ENCODE measurements at regions of chr1 and their contacts with region 1.

Region 1: DNA sequence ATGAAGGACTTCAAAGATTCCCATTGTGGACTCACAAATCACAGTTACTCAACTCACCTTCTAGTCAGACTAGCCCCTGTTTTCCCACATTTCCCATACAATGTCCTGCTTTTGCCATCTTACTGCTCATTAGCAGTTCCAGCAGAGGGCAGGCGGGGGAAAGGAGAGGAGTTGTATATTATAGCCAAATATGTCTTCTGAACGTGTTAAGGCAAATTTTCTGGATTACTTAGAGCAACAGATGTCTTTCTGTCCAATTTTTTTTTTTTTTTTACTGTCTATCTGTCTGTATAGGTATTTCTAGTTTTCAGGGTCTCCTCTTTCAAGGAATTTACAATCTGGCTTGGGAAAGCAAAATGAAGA is 29.9 kb upstream of the DDAH1 start:
- DNase-seq: peak; percentile 79
- H3K4me3 Mint-ChIP-seq: no peak overlapping the region
- H3K27ac Mint-ChIP-seq: peak overlapping the region; percentile 96
- H3K4me1 Mint-ChIP-seq: peaks cover 23% of the 10 kb centered on the region
- H3K27me3 Mint-ChIP-seq: no peaks in the 10 kb centered on the region
- CTCF ChIP-seq: peak; percentile 61

Region 2: GRCh38 chr1:85398391-85399064 is 96.4 kb before region 1 on chr1:
- CTCF ChIA-PET with region 1: no interaction called
- POLR2A ChIA-PET with region 1: no interaction called
- intact Hi-C with region 1: no loop called
- DNase-seq: peak; percentile 66
- H3K4me3 Mint-ChIP-seq: no peak overlapping the region
- H3K27ac Mint-ChIP-seq: no peak overlapping the region
- H3K4me1 Mint-ChIP-seq: peaks cover 7% of the 10 kb centered on the region
- H3K27me3 Mint-ChIP-seq: no peaks in the 10 kb centered on the region
- CTCF ChIP-seq: peak; percentile 44

Region 3: GRCh38 chr1:85484264-85484663 is 10.6 kb before region 1 on chr1:
- CTCF ChIA-PET with region 1: interaction called, 3 read pairs
- POLR2A ChIA-PET with region 1: interaction called, 11 read pairs
- intact Hi-C with region 1: no loop called
- DNase-seq: no peak
- H3K4me3 Mint-ChIP-seq: no peak overlapping the region
- H3K27ac Mint-ChIP-seq: no peak overlapping the region
- H3K4me1 Mint-ChIP-seq: no peaks in the 10 kb centered on the region
- H3K27me3 Mint-ChIP-seq: no peaks in the 10 kb centered on the region
- CTCF ChIP-seq: no peak

Region 4: DNA sequence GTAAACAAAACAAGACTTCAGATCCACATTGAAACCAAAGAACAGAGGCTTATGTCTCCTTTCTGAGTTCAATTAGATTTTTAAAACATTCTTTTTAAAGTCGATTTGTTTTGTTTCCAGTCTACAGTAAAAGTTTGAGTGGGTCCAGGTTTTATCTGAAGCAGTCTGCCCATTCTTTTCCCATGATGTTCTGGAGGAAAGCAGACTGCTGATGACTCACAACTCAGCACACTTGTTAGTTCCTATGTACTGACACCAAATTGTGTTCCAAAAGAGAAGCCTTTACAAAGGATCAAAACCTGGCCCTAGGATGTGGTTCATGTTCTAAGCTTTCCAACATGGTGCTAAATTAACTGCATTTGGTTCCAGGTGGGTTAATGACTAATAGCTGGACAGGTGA is 74.2 kb after region 1 on chr1:
- CTCF ChIA-PET with region 1: interaction called, 7 read pairs
- POLR2A ChIA-PET with region 1: interaction called, 26 read pairs
- intact Hi-C with region 1: no loop called
- DNase-seq: no peak
- H3K4me3 Mint-ChIP-seq: no peak overlapping the region
- H3K27ac Mint-ChIP-seq: peak overlapping the region; percentile 21
- H3K4me1 Mint-ChIP-seq: peaks cover 49% of the 10 kb centered on the region
- H3K27me3 Mint-ChIP-seq: no peaks in the 10 kb centered on the region
- CTCF ChIP-seq: no peak

Region 5: GRCh38 chr1:85692730-85693314 is 197.9 kb after region 1 on chr1:
- CTCF ChIA-PET with region 1: interaction called, 9 read pairs
- POLR2A ChIA-PET with region 1: interaction called, 5 read pairs
- intact Hi-C with region 1: loop called (anchors 2 kb)
- DNase-seq: peak; percentile 52
- H3K4me3 Mint-ChIP-seq: no peak overlapping the region
- H3K27ac Mint-ChIP-seq: peak overlapping the region; percentile 65
- H3K4me1 Mint-ChIP-seq: peaks cover 10% of the 10 kb centered on the region
- H3K27me3 Mint-ChIP-seq: no peaks in the 10 kb centered on the region
- CTCF ChIP-seq: peak; percentile 60

Region 6: GRCh38 chr1:85884372-85885035 is 389.6 kb after region 1 on chr1:
- CTCF ChIA-PET with region 1: interaction called, 3 read pairs
- POLR2A ChIA-PET with region 1: no interaction called
- intact Hi-C with region 1: loop called (anchors 10 kb)
- DNase-seq: peak; percentile 42
- H3K4me3 Mint-ChIP-seq: no peak overlapping the region
- H3K27ac Mint-ChIP-seq: no peak overlapping the region
- H3K4me1 Mint-ChIP-seq: no peaks in the 10 kb centered on the region
- H3K27me3 Mint-ChIP-seq: peaks cover 13% of the 10 kb centered on the region
- CTCF ChIP-seq: peak; percentile 52

Region 7: DNA sequence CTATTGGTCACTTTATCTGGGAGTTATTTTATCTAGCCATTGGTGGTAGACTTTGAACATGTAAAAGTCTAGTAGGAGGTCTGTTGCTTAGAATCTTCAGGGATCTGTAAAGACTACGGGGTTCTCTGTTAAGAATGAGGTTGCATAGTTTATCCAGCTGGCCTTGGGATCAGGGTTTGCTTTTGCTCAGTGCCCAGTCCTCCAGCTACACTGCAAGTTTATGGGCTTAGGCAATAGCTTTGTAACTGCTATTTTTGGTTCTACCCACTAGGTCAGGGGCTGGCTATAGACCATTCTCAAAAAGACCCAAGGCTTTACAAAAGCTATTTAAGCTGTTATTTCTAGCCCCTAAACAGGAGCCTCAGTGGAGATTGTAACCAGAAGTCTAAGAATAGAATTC is 1219.3 kb after region 1 on chr1:
- CTCF ChIA-PET with region 1: no interaction called
- POLR2A ChIA-PET with region 1: no interaction called
- intact Hi-C with region 1: no loop called
- DNase-seq: peak; percentile 13
- H3K4me3 Mint-ChIP-seq: peak overlapping the region; percentile 19
- H3K27ac Mint-ChIP-seq: peak overlapping the region; percentile 17
- H3K4me1 Mint-ChIP-seq: peaks cover 8% of the 10 kb centered on the region
- H3K27me3 Mint-ChIP-seq: no peaks in the 10 kb centered on the region
- CTCF ChIP-seq: no peak

Measured in MCF 10A (cell line).